CD8-positive, alpha-beta memory T cell (primary cell): ENCODE measurements at regions of chr11 and their contacts with region 1.

Region 1: DNA sequence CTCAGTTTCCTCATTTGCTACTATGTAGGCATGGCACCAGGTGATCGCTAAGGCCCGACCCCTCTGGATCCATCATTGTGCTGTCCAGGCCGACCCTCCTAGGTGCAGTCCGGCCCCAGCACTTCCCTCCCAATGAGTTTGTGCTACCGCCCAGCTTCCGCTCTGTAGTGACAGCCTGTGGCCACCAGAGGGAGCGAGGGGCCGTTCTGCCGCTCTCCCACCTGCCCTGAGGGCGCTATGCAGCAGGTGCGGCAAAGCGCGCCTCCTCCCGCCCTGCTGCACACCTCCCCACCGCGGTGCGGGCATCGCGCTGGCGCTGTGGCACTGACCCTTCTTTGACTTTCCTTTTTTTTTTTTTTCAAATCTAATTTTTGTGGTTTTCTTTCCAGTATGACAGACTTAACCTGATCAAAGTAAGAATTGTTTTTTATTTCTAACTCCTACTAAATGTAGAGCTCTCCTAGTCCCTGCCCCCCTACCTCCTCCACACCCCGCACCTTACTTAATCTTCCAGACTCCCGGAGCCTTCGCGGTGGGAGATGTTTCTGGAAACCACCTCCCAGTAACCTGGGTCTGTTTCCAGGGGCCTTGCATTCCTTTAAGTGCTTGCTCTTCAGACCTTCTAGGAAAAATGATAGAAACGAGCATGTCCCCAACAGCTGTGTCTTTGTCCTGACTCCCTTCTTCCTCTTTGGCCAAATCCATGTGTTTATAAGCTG is 73.7 kb downstream of the SCN3B start:
- DNase-seq: peak; percentile 38 to 73 (median 51)
- H3K4me3 ChIP-seq: no peak overlapping the region
- H3K4me3 Mint-ChIP-seq: peak overlapping the region in 5 of 7 donors; percentile 22 to 62 (median 45)
- H3K27ac ChIP-seq: no peak overlapping the region
- H3K27ac Mint-ChIP-seq: peak overlapping the region in 1 of 8 donors; percentile 54
- H3K4me1 ChIP-seq: peaks cover 7% of the 10 kb centered on the region
- H3K4me1 Mint-ChIP-seq: peaks cover 17 to 27% (median 21%) of the 10 kb centered on the region in 3 donors
- H3K27me3 ChIP-seq: no peaks in the 10 kb centered on the region
- H3K27me3 Mint-ChIP-seq: no peaks in the 10 kb centered on the region

Region 2: GRCh38 chr11:123560006-123560405 is 20.7 kb before region 1 on chr11:
- CTCF ChIA-PET with region 1: interaction called, 10 read pairs
- POLR2A ChIA-PET with region 1: no interaction called
- DNase-seq: peak in 2 of 5 donors; percentile 5 to 25
- H3K4me3 ChIP-seq: no peak overlapping the region
- H3K4me3 Mint-ChIP-seq: peak overlapping the region in 4 of 7 donors; percentile 1 to 83 (median 51)
- H3K27ac ChIP-seq: no peak overlapping the region
- H3K27ac Mint-ChIP-seq: peak overlapping the region in 2 of 8 donors; percentile 63 to 86
- H3K4me1 ChIP-seq: no peaks in the 10 kb centered on the region
- H3K4me1 Mint-ChIP-seq: peaks cover 0 to 10% (median 5%) of the 10 kb centered on the region in 3 donors
- H3K27me3 ChIP-seq: no peaks in the 10 kb centered on the region
- H3K27me3 Mint-ChIP-seq: peaks cover 0 to 6% of the 10 kb centered on the region in 2 donors

Region 3: DNA sequence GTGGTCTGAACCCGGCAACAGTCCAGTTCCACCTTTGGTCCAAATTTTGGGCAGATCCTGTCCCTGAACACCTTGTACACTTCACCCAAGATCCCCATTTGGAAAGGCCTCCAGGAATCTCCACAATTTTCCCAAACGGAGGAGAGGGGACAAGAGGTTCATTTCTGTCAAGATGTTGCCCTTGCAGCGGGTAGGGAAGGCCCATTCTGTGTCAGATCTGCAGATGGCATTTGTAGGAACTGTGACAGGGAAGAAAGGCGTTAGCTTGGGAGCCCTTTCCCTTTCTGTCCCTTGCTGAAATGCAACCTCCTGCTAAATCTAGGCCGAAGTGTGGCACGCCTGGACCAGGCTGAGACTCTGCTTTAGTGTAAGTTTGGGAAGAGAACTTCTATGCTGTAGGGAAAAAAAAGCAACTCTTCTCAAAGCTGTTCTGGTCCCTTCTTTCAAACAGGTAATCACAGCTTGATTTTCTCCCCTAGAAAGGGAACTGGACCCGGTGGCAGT is 12.3 kb before region 1 on chr11:
- CTCF ChIA-PET with region 1: interaction called, 12 read pairs
- POLR2A ChIA-PET with region 1: no interaction called
- DNase-seq: no peak
- H3K4me3 ChIP-seq: no peak overlapping the region
- H3K4me3 Mint-ChIP-seq: no peak overlapping the region
- H3K27ac ChIP-seq: no peak overlapping the region
- H3K27ac Mint-ChIP-seq: no peak overlapping the region
- H3K4me1 ChIP-seq: no peaks in the 10 kb centered on the region
- H3K4me1 Mint-ChIP-seq: no peaks in the 10 kb centered on the region
- H3K27me3 ChIP-seq: no peaks in the 10 kb centered on the region
- H3K27me3 Mint-ChIP-seq: no peaks in the 10 kb centered on the region

Region 4: DNA sequence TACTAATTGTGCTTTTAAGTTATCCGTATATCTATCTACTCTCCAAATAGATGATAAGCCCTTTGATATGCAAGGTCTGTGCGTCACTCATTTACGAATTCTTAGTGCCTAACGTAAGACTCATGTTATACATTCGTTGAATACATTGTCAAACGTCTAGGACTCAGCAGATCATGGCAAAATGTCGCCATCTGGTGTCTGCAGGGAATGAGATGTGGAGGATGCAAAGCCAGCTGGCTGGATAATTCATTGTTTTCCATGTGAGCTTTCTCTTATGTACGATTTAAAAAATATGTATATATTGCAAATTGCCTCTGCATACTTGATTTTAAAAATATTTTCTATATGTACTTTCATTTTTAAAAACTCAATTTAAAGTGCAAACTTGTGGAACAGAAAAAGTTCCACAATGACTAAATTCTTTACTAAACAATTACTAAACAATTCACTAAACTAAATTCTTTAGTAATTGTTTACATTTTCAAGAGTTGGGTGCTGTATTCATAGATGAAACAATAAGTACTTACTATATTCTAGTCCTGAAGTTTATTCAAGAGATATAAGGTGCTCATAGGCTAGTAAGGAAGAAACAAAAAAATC is 127.0 kb after region 1 on chr11:
- CTCF ChIA-PET with region 1: interaction called, 14 read pairs
- POLR2A ChIA-PET with region 1: no interaction called
- DNase-seq: peak in 3 of 5 donors; percentile 11 to 57 (median 53)
- H3K4me3 ChIP-seq: no peak overlapping the region
- H3K4me3 Mint-ChIP-seq: no peak overlapping the region
- H3K27ac ChIP-seq: no peak overlapping the region
- H3K27ac Mint-ChIP-seq: no peak overlapping the region
- H3K4me1 ChIP-seq: no peaks in the 10 kb centered on the region
- H3K4me1 Mint-ChIP-seq: no peaks in the 10 kb centered on the region
- H3K27me3 ChIP-seq: no peaks in the 10 kb centered on the region
- H3K27me3 Mint-ChIP-seq: peaks cover 15 to 22% of the 10 kb centered on the region in 2 donors